Activated CD4-positive, alpha-beta T cell treated with anti-CD3 and anti-CD28 coated beads, Interleukin-2, amount 10 ng/mL, durations not matched to agents 7 days and 5 days (primary cell): ENCODE measurements at regions of chr5 and their contacts with region 1.

Region 1: DNA sequence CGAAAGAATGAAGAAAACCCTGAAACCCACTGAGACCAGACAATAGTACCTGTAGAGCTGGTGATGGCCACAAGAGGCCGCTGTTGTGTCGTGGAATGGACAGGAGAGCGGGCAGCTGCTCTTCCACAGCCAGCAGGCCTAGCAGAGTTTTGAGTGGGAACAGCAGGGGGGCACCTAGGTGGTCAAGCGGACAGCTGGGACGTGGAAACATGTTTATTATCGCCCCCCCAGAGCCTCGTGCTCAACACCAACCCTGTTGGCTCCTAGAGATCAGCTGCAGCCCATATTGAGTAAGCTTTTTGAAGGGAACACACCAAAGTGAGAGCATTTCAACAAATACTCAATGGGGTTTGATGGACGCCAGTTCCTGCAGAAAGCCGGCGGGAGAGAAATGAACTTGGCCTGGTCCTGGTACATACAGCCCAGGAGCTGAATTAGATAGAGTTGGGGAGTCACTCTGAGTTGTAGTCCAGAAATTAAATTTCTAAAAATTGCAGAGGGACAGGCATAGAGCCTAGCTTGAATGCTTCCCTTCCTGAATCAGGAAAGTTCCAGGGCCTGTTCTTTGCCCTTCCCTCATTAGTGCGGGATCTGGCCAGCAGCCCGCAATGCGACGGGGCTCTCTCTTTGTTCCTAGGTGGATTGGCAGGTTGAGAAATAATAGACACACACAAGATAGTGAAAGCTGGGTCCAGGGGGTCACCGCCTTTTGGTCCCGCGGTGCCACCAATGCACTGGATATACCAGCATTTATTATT is 33.8 kb downstream of the MFAP3 start:
- DNase-seq: peak; percentile 89
- H3K4me3 Mint-ChIP-seq: no peak overlapping the region
- H3K27ac Mint-ChIP-seq: peak overlapping the region; percentile 14
- H3K4me1 Mint-ChIP-seq: peaks cover 54% of the 10 kb centered on the region
- H3K27me3 Mint-ChIP-seq: no peaks in the 10 kb centered on the region

Region 2: DNA sequence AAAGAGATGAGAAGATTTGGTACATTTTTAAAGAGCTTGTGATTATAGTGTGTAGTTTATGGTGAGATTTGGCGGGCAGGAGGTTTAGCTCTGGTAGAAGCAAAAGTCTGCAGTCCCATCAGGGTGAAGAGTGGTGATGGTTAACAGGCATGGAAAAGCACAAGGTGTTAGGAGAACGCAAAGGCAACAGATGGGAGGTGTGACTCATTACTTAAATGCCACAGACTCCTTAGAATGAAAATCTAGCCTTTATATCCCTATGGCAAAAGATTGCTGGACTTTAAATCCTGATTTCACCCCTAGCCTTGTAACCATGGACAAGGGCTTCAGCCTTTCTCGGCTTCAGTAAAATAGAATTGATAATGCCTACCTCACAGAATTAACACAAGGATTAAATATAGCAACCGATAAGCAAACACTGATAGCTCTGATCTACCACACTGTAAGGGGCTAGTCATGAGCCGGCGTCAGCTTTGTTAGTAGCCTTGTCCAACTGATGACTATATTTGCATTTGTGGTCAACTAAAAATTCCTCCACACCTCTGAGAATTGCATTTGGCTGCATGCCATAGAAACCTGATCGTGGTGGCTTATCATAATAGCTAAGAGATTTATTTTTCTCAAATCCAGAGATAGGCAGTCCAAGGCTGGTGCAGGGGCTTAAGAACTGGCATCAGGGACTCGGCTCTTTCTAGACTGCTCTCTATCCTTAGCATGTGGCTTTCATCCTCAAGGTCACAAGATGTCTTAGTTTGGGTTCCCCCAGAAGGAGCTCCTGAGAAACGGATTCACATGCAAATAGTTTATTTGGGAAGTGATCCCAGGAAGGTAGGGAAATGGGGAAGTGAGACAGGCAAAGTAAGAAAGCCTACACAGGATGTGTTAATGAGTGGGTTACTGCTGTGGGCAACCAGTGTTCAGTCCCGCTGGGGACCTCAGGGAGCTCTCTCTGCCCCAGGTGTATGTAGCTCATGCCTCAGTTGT is 14.2 kb before region 1 on chr5:
- CTCF ChIA-PET with region 1: interaction called, 23 read pairs
- POLR2A ChIA-PET with region 1: no interaction called
- DNase-seq: no peak
- H3K4me3 Mint-ChIP-seq: no peak overlapping the region
- H3K27ac Mint-ChIP-seq: no peak overlapping the region
- H3K4me1 Mint-ChIP-seq: peaks cover 18% of the 10 kb centered on the region
- H3K27me3 Mint-ChIP-seq: no peaks in the 10 kb centered on the region

Region 3: DNA sequence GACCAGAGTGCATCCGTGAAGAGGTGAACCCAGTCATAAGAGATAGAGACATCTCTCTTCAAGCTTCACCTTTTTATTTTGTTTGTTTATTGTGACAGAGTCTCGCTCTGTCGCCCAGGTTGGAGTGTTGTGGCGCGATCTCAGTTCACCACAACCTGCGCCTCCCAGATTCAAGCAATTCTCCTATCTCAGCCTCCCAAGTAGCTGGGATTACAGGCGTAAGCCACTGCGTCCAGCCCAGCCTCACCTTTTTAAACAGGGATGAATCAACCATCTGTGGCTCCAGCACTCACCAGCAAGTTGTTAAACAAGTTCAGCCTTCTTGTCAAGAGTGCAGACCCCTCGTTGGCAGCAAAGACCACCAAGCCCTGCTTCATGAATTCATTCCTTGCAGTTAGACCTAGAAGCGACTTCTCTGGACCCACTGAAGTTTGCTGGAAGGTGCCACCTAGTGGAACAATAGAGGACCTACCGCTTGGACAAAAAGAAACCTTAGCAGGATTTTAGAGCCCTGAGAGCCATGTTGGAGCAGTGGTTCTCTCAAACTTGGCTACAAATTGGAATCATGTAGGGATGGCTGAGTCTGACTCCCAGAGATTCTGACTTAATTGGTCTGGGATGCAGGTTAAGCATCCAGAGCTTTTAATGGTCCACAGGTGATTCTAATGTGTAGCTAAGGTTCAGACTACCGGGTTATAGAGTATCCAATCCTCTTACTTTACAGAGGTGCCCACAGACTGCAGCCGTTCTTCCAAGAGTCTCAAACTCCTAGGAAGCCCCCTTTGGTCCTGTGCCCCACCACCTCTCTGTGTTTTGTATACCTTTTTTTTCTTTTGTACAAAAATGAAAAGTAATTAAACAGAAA is 107.5 kb after region 1 on chr5:
- CTCF ChIA-PET with region 1: interaction called, 16 read pairs
- POLR2A ChIA-PET with region 1: no interaction called
- DNase-seq: peak; percentile 53
- H3K4me3 Mint-ChIP-seq: no peak overlapping the region
- H3K27ac Mint-ChIP-seq: no peak overlapping the region
- H3K4me1 Mint-ChIP-seq: peaks cover 26% of the 10 kb centered on the region
- H3K27me3 Mint-ChIP-seq: peaks cover 11% of the 10 kb centered on the region

Region 4: GRCh38 chr5:154238776-154239481 is 166.3 kb after region 1 on chr5:
- CTCF ChIA-PET with region 1: interaction called, 21 read pairs
- POLR2A ChIA-PET with region 1: no interaction called
- DNase-seq: no peak
- H3K4me3 Mint-ChIP-seq: no peak overlapping the region
- H3K27ac Mint-ChIP-seq: no peak overlapping the region
- H3K4me1 Mint-ChIP-seq: peaks cover 34% of the 10 kb centered on the region
- H3K27me3 Mint-ChIP-seq: no peaks in the 10 kb centered on the region

Region 5: DNA sequence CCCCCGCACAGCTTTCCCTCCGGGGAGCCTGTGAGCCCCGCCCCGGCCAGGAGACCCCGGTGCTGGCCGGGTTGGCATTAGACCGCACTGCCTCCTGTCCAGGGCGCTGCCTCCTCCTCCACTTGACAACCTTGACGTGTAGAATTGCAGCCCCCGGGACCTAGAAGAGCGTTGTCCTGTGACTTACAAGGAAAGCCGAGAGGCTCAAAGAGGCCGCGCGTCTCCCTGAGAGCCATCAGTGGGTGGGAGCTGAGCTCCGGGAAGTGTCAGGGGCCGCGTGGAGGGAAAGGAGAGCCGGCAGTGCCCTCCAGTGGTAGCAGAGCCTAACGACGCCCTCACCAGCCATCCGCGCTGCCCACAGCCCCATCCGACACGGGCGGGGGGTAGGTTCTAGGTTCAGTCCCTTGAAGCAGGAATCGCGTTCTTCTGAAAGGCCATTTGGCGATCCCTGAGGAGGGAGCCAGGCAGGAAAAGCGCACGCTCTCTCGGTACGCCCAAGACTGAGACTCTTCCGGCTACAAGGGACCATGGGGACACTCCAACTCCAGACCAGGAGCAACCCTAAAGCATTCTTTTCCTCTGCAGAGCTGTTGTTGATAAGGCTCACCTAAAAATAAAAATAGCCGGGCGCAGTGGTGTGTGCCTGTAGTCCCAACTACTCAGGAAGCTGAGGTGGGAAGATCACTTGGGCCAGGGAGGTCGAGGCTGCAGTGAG is 332.6 kb after region 1 on chr5:
- CTCF ChIA-PET with region 1: interaction called, 16 read pairs
- POLR2A ChIA-PET with region 1: no interaction called
- DNase-seq: peak; percentile 71
- H3K4me3 Mint-ChIP-seq: no peak overlapping the region
- H3K27ac Mint-ChIP-seq: peak overlapping the region; percentile 56
- H3K4me1 Mint-ChIP-seq: peaks cover 6% of the 10 kb centered on the region
- H3K27me3 Mint-ChIP-seq: no peaks in the 10 kb centered on the region